ENCODE measurements at regions of chr11 and their contacts with region 1.

Region 1: DNA sequence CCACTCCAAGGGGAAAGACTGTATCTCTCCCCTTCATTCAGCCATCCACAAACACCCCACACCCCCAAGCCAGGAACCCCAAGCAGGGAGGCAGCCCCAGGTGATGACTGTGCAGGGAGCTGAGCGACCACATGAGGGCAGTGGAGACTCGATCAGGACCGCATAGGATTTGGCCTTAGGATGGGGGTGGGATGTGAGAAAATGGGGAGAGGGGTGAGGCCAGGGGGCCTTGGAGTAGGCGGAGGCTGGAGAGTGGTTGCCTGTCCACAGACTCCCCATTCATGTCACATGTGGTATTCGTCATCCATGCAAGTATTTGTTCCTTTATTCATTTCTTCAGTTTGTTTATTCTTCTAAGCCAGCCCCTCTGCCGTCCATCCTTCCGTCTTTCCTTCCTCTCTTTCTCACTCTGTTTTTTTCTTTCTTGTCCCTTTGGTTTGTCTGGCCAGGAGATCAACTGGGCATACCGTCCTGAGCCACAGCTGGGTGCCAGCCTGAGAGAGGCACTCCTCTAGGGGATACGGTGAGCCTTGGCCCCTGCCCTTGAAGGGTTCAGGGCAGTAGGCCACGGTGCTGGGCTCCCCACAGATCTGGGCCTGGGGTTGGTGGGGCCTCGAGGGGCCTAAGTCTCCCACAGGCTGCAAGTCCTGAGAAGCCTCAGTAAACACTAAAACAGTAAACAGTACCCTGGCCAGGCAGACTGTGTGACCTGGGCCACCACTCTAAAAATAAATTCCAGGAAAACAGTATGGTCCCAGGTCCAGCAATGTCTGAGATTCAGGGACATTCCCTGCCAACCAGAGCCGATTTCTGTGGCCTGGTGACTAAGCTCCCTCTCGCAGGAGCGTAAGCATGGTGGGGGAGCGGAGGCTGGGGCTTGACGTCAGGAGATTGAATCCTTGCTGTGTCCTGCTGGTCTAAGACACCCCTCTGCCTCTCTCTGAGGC is 2.5 kb upstream of the RHOD start:
- DNase-seq: no peak
- ATAC-seq: peak; percentile 90
- H3K4me3 ChIP-seq: no peak overlapping the region
- H3K27ac ChIP-seq: no peak overlapping the region
- H3K4me1 ChIP-seq: peaks cover 10% of the 10 kb centered on the region
- H3K27me3 ChIP-seq: no peaks in the 10 kb centered on the region
- CTCF ChIP-seq: peak; percentile 73 to 89 (median 80)
- EP300 ChIP-seq: no peak
- POLR2A ChIP-seq: no peak
- RAD21 ChIP-seq: peak; percentile 87

Region 2: DNA sequence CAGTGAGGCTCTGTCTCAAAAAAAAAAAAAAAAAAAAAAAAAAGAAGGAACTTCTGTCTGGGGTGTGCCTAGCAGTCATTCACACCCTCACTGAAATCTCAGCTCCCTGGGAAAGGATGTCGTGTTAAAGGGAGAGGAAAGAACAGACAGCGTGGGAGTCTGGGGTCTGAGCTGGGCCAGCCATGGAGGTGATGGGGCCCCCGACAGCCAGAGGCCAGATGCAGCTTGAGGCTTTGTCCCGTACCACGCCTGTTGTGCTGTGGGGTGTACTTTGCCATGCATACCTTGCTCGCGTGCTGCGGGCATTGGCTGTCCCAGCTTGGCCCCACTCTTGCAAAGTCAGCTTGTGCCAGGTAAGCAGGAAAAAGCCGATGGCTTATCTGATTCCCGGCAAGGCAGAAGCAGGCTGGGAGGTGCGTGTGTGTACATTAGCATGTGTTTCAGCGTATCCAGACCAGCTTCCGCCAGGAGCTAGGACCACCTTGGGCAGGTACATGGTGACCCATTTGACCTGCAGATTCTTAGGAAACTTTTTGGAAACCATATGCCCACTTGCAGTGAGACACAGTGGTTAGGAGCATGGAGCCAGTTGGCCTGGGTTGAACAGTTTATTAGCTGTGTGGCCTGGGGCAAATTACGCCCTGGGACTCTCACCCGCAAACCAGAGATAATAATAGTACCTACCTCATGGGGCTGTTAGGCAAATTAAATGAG is 26.5 kb before region 1 on chr11:
- CTCF ChIA-PET with region 1: interaction called, 10 read pairs
- POLR2A ChIA-PET with region 1: no interaction called
- RAD21 ChIA-PET with region 1: interaction called, 4 read pairs
- SMC1A ChIA-PET with region 1: no interaction called
- in situ Hi-C with region 1: no loop called
- intact Hi-C with region 1: no loop called
- DNase-seq: peak; percentile 53
- ATAC-seq: peak; percentile 91
- H3K4me3 ChIP-seq: no peak overlapping the region
- H3K27ac ChIP-seq: peak overlapping the region; percentile 27
- H3K4me1 ChIP-seq: peaks cover 63% of the 10 kb centered on the region
- H3K27me3 ChIP-seq: peaks cover 0 to 8% of the 10 kb centered on the region in 2 experiments; a peak in 3 of 4 replicates
- CTCF ChIP-seq: no peak
- EP300 ChIP-seq: peak in 1 of 2 experiments; percentile 80; a peak in 2 of 4 replicates
- POLR2A ChIP-seq: no peak
- RAD21 ChIP-seq: no peak

Region 3: GRCh38 chr11:67071420-67072284 is 17.5 kb after region 1 on chr11:
- CTCF ChIA-PET with region 1: interaction called, 55 read pairs
- POLR2A ChIA-PET with region 1: no interaction called
- RAD21 ChIA-PET with region 1: interaction called, 6 read pairs
- SMC1A ChIA-PET with region 1: interaction called, 6 read pairs
- in situ Hi-C with region 1: no loop called
- intact Hi-C with region 1: no loop called
- DNase-seq: no peak
- ATAC-seq: peak; percentile 94
- H3K4me3 ChIP-seq: no peak overlapping the region
- H3K27ac ChIP-seq: no peak overlapping the region
- H3K4me1 ChIP-seq: peaks cover 7% of the 10 kb centered on the region
- H3K27me3 ChIP-seq: no peaks in the 10 kb centered on the region; a peak in 2 of 4 replicates
- CTCF ChIP-seq: peak; percentile 74 to 91 (median 85)
- EP300 ChIP-seq: no peak
- POLR2A ChIP-seq: no peak
- RAD21 ChIP-seq: peak; percentile 46